ENCODE measurements at regions of chrX and their contacts with region 1.

Region 1: DNA sequence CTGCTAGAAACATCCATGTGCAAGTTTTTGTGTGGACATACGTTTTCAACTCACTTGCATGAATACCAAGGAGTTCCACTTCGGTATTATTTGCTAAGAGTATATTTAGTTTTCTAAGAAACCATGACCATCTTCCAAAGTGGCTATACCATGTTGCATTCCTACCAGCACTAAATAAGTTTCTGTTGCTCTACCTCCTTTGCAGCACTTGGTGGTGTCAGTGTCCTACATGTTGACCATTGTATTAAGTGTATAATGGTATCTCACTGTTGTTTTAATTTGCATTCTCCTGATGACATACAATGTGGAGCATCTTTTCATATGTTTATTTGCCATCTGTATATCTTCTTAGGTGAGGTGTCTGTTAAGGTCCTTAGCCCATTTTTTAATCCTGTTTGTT is 8.0 kb upstream of the GPRASP1 start:
- DNase-seq: no peak
- ATAC-seq: no peak
- H3K4me3 ChIP-seq: no peak overlapping the region
- H3K27ac ChIP-seq: no peak overlapping the region
- H3K4me1 ChIP-seq: no peaks in the 10 kb centered on the region
- H3K27me3 ChIP-seq: no peaks in the 10 kb centered on the region
- CTCF ChIP-seq: no peak
- EP300 ChIP-seq: no peak
- POLR2A ChIP-seq: no peak
- RAD21 ChIP-seq: peak in 1 of 2 experiments; percentile 26; a peak in 1 of 4 replicates

Region 2: GRCh38 chrX:102863735-102864134 is 220.5 kb after region 1 on chrX:
- CTCF ChIA-PET with region 1: no interaction called
- POLR2A ChIA-PET with region 1: no interaction called
- in situ Hi-C with region 1: no loop called
- intact Hi-C with region 1: loop called (anchors 10 kb)
- DNase-seq: peak; percentile 61 to 85 (median 73)
- ATAC-seq: peak; percentile 97
- H3K4me3 ChIP-seq: no peak overlapping the region
- H3K27ac ChIP-seq: no peak overlapping the region
- H3K4me1 ChIP-seq: no peaks in the 10 kb centered on the region
- H3K27me3 ChIP-seq: no peaks in the 10 kb centered on the region
- CTCF ChIP-seq: peak; percentile 70 to 87 (median 83)
- EP300 ChIP-seq: no peak
- POLR2A ChIP-seq: no peak
- RAD21 ChIP-seq: peak; percentile 68 to 70

Region 3: GRCh38 chrX:102899940-102900916 is 257.0 kb after region 1 on chrX:
- CTCF ChIA-PET with region 1: no interaction called
- POLR2A ChIA-PET with region 1: no interaction called
- in situ Hi-C with region 1: no loop called
- intact Hi-C with region 1: loop called (anchors 1 kb)
- DNase-seq: peak; percentile 41 to 74 (median 59)
- ATAC-seq: peak; percentile 98
- H3K4me3 ChIP-seq: no peak overlapping the region
- H3K27ac ChIP-seq: no peak overlapping the region
- H3K4me1 ChIP-seq: no peaks in the 10 kb centered on the region; a peak in 1 of 5 replicates
- H3K27me3 ChIP-seq: no peaks in the 10 kb centered on the region
- CTCF ChIP-seq: peak; percentile 62 to 74 (median 70)
- EP300 ChIP-seq: no peak
- POLR2A ChIP-seq: no peak
- RAD21 ChIP-seq: peak; percentile 33 to 65

Measured in K562 (cell line).